Naive thymus-derived CD4-positive, alpha-beta T cell (primary cell): ENCODE measurements at regions of chr2 and their contacts with region 1.

Region 1: GRCh38 chr2:25376750-25377621 is 35.3 kb upstream of the DNMT3A start:
- DNase-seq: peak; percentile 89 to 94 (median 92)
- ATAC-seq: peak; percentile 99
- H3K4me3 ChIP-seq: peak overlapping the region; percentile 53
- H3K4me3 Mint-ChIP-seq: peak overlapping the region; percentile 67 to 87 (median 74)
- H3K27ac ChIP-seq: peak overlapping the region; percentile 66
- H3K27ac Mint-ChIP-seq: peak overlapping the region; percentile 90 to 97 (median 94)
- H3K4me1 ChIP-seq: peaks cover 28 to 31% of the 10 kb centered on the region in 2 donors
- H3K4me1 Mint-ChIP-seq: peaks cover 29 to 49% (median 32%) of the 10 kb centered on the region in 7 donors
- H3K27me3 ChIP-seq: no peaks in the 10 kb centered on the region
- H3K27me3 Mint-ChIP-seq: no peaks in the 10 kb centered on the region

Region 2: GRCh38 chr2:25165992-25166875 is 210.8 kb before region 1 on chr2:
- CTCF ChIA-PET with region 1: interaction called, 10 read pairs
- POLR2A ChIA-PET with region 1: no interaction called
- intact Hi-C with region 1: loop called in 1 of 2 experiments (anchors 1 kb)
- DNase-seq: peak in 7 of 9 donors; percentile 12 to 46 (median 40)
- ATAC-seq: peak; percentile 69
- H3K4me3 ChIP-seq: no peak overlapping the region
- H3K4me3 Mint-ChIP-seq: peak overlapping the region in 7 of 10 donors; percentile 15 to 83 (median 68)
- H3K27ac ChIP-seq: no peak overlapping the region
- H3K27ac Mint-ChIP-seq: peak overlapping the region in 2 of 9 donors; percentile 2 to 69
- H3K4me1 ChIP-seq: no peaks in the 10 kb centered on the region
- H3K4me1 Mint-ChIP-seq: peaks cover 6 to 36% (median 26%) of the 10 kb centered on the region in 7 donors
- H3K27me3 ChIP-seq: no peaks in the 10 kb centered on the region
- H3K27me3 Mint-ChIP-seq: peaks cover 11 to 73% (median 35%) of the 10 kb centered on the region in 5 donors

Region 3: DNA sequence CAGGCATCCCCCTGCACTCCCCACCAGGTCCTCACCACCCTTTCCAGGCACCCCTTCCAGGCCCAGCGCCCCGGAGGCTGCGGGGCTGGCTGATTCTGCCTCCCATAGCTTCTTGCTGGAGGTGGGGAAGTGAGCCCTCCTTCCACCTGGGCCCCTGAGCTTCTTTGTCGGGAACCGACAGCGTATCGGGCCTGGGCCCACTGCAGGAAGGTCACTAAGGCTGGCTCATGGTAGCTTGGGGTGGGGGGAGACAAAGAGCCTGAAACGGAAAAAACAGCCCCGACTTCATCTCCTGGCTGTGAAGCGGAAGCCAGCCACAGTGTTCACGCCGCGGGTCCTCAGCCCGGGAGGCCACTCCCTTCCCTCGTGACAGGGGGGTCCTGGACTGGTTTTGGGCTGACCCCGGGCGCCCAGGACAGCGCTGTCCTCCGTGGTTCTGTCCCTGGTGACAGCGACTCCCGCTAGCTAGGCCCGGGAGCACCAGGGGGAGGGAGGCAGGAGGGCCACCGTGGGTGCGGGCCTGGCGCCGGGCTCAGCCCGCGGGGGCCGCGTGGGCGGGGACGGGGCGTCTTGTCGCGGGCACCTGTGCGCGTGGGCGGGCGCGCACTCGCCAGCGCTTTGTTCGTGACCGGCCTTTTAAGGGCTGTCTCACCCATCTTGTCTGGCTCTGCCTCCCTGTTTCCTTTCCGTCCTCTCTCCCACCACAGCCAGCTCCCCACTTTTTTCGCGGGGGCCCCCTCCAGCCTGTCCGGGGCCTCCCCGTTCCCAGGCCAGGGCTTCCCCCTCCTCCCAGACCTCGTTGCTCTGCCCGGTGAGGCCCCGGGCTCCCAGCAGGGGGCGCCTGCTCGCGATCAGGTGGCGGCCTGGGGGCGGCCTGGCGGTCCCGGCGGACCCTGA is 100.2 kb before region 1 on chr2:
- CTCF ChIA-PET with region 1: no interaction called
- POLR2A ChIA-PET with region 1: interaction called, 4 read pairs
- intact Hi-C with region 1: loop called in 1 of 2 experiments (anchors 1 kb)
- DNase-seq: peak; percentile 59 to 89 (median 70)
- ATAC-seq: peak; percentile 50
- H3K4me3 ChIP-seq: peak overlapping the region; percentile 53
- H3K4me3 Mint-ChIP-seq: peak overlapping the region; percentile 71 to 83 (median 79)
- H3K27ac ChIP-seq: peak overlapping the region; percentile 92
- H3K27ac Mint-ChIP-seq: peak overlapping the region; percentile 88 to 100 (median 99)
- H3K4me1 ChIP-seq: peaks cover 54 to 82% of the 10 kb centered on the region in 2 donors
- H3K4me1 Mint-ChIP-seq: peaks cover 52 to 89% (median 80%) of the 10 kb centered on the region in 7 donors
- H3K27me3 ChIP-seq: no peaks in the 10 kb centered on the region
- H3K27me3 Mint-ChIP-seq: no peaks in the 10 kb centered on the region

Region 4: DNA sequence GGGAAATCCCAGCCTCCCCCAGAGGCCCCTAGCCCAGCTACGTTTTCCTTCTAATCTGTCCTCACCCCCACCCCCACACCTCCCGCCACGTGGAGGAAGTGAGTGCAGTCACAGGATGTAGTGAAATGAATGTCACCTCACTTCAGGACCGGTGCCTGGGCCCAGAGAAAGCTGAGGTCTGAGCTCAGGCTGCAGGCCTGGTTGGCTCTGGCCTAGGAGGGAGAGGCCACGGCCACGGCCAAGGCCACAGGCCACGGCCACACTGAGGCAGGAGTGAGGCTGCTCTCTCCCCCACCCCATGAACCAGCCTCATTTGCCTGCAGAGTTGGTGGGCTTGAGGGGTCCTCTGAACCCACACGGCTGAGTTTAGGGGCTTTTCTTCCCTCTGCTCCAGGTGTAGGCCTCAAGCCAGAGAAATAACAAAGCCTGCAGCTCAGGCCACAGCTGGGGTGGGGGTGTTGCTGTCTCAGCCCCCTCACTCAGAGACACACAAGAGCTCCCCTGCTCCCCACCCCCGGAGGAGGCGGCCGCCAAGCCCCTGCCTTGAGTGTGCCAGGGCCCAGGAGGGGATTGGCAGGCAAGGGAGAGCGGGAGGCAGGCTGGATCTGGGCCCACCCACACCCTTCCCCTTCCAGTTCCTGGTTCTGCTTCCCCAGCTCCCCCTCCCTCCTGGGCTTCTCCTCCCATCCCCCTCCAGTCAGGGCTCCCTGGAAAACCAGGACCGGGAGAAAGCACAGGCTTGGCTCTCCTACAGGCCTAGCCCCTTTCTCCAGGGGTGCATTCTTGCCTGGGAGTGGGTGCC is 62.3 kb before region 1 on chr2:
- CTCF ChIA-PET with region 1: interaction called, 12 read pairs
- POLR2A ChIA-PET with region 1: interaction called, 5 read pairs
- intact Hi-C with region 1: loop called (anchors 1 kb)
- DNase-seq: peak in 8 of 9 donors; percentile 51 to 90 (median 64)
- ATAC-seq: peak; percentile 79
- H3K4me3 ChIP-seq: peak overlapping the region; percentile 51
- H3K4me3 Mint-ChIP-seq: peak overlapping the region; percentile 61 to 83 (median 81)
- H3K27ac ChIP-seq: peak overlapping the region; percentile 79
- H3K27ac Mint-ChIP-seq: peak overlapping the region; percentile 79 to 97 (median 92)
- H3K4me1 ChIP-seq: peaks cover 34 to 60% of the 10 kb centered on the region in 2 donors
- H3K4me1 Mint-ChIP-seq: peaks cover 36 to 84% (median 70%) of the 10 kb centered on the region in 7 donors
- H3K27me3 ChIP-seq: no peaks in the 10 kb centered on the region
- H3K27me3 Mint-ChIP-seq: no peaks in the 10 kb centered on the region

Region 5: DNA sequence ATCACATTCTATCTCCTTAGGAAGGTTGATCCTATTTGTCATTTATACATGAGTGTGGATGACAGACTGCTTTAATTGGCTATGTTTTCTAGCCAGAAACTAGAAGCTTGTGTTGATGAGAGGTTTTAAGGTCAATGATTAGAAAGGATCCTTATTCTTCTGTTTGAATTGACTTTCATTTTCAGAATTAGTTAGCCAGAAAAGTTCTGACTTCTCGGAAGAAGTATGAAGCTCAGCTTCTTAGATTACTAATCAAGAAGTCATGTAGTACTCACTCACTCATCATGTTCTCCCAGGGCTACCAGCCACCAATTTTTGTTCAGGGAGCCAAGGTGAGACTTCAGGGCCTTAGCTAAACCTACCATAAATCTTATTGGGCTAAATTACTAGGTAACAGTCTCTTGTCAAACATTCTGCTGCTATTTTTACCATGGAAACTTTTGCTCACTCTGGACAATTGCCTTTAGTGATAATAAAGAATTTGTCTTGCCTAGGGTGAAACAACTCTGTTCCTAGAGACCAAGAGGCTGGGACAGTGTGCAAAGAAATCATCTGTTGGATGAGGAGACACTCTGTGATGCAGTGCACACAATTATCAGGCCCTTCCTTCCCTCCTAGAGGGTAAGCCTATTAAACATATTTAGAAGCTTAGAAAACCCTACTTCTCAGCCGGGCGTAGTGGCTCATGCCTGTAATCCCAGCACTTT is 76.4 kb after region 1 on chr2:
- CTCF ChIA-PET with region 1: interaction called, 3 read pairs
- POLR2A ChIA-PET with region 1: no interaction called
- intact Hi-C with region 1: loop called (anchors 1 to 5 kb)
- DNase-seq: peak in 1 of 9 donors; percentile 33
- ATAC-seq: no peak
- H3K4me3 ChIP-seq: no peak overlapping the region
- H3K4me3 Mint-ChIP-seq: peak overlapping the region in 1 of 10 donors; percentile 81
- H3K27ac ChIP-seq: no peak overlapping the region
- H3K27ac Mint-ChIP-seq: peak overlapping the region in 2 of 9 donors; percentile 30 to 96
- H3K4me1 ChIP-seq: no peaks in the 10 kb centered on the region
- H3K4me1 Mint-ChIP-seq: peaks cover 0 to 38% (median 0%) of the 10 kb centered on the region in 7 donors
- H3K27me3 ChIP-seq: no peaks in the 10 kb centered on the region
- H3K27me3 Mint-ChIP-seq: no peaks in the 10 kb centered on the region

Region 6: DNA sequence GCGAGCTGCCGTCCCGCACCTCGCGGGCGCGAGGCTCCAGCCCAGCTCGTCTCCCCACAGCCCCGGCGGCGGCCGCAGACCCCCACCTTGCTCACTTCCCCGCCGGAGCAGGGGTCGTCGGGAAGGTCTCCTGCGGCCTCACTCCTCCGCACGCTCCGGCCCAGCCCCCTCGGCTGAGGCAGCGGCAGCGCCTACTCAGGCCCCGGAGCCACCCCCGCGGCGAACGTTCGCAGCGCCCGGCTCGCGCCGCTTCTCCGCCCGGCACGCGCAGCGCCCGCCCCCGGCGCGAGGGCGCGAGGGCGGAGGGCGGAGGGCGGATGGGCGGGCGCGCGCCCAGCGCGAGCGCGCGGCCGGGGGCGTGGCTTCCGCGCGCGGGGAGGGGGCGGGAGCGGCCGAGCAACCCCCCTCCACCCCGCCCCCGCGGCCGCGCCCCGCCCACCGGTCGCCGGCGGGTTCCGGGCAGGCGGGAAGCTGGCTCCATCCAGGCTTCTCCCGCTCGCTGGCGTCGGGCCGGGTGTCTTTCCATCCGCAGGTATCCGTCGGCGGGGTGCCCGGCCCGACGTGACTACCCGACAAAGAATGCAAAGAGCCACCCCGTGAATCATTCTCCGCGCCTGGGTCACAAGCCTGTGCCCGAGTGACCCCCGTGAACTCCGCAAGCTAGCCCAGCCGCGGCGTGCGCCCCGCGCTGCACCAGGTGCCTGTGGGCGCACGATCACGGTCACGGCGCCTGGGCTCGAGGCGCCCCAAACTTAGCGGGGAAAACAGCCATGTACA is 296.5 kb after region 1 on chr2 and contains the start of gene DTNB:
- CTCF ChIA-PET with region 1: no interaction called
- POLR2A ChIA-PET with region 1: no interaction called
- intact Hi-C with region 1: loop called in 1 of 2 experiments (anchors 10 kb)
- DNase-seq: peak; percentile 68 to 82 (median 79)
- ATAC-seq: peak; percentile 89
- H3K4me3 ChIP-seq: peak within 1 kb of the TSS; percentile 94
- H3K4me3 Mint-ChIP-seq: peak within 1 kb of the TSS; percentile 84 to 90 (median 88)
- H3K27ac ChIP-seq: peak within 1 kb of the TSS; percentile 80
- H3K27ac Mint-ChIP-seq: peak within 1 kb of the TSS; percentile 74 to 92 (median 84)
- H3K4me1 ChIP-seq: peaks cover 12 to 15% of the 10 kb centered on the region in 2 donors
- H3K4me1 Mint-ChIP-seq: peaks cover 15 to 56% (median 37%) of the 10 kb centered on the region in 7 donors
- H3K27me3 ChIP-seq: no peaks in the 10 kb centered on the region
- H3K27me3 Mint-ChIP-seq: peaks cover 0 to 25% (median 0%) of the 10 kb centered on the region in 5 donors
- total RNA-seq, gene DTNB: 32.8 to 56.2 (median 33.8) TPM

Region 7: GRCh38 chr2:25726522-25726921 is 349.5 kb after region 1 on chr2:
- CTCF ChIA-PET with region 1: no interaction called
- POLR2A ChIA-PET with region 1: no interaction called
- intact Hi-C with region 1: no loop called
- DNase-seq: no peak
- ATAC-seq: no peak
- H3K4me3 ChIP-seq: no peak overlapping the region
- H3K4me3 Mint-ChIP-seq: no peak overlapping the region
- H3K27ac ChIP-seq: no peak overlapping the region
- H3K27ac Mint-ChIP-seq: no peak overlapping the region
- H3K4me1 ChIP-seq: no peaks in the 10 kb centered on the region
- H3K4me1 Mint-ChIP-seq: no peaks in the 10 kb centered on the region
- H3K27me3 ChIP-seq: no peaks in the 10 kb centered on the region
- H3K27me3 Mint-ChIP-seq: peaks cover 0 to 13% (median 0%) of the 10 kb centered on the region in 5 donors